ENCODE measurements at regions of chr2 and their contacts with region 1.

Region 1: DNA sequence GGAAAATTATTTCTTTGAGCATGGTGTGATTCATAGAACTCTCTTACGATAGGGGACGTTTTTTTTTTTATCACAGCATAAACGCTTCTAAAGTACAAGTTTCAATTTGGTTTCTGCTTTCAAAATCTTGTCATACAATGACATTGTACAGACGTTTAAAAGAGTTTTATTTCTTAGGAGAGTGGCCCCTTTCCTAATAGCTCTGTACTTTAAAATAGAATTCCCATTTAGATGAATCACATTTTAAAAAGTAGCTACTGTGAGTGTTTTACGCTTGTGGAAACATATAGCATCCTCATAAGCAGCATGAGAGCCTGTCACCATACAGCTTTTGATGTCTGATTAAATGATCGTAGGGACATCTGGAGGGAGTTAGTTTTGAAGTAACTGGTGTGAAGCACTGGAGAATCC is 510.9 kb downstream of the PARD3B start:
- DNase-seq: no peak

Region 2: DNA sequence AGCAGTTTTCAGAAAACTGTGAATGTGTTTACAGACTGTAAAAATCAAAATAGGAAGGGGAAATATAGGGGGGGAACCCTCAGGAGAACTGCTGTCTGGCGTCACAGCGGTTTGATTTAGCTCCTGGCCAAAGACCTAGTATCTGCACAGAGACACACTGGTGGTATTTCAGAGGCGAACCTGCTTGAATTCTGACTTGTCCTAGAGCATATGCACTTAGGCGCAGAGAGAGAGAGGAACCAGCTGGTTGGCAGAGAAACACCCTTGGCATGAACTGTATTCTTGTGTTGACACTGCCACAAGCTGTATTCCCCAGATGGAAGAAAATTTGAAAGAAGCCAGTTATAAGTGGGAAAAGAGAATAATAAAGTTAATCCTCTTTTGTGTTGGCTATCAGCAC is 119.7 kb after region 1 on chr2:
- intact Hi-C with region 1: no loop called
- DNase-seq: no peak

Region 3: DNA sequence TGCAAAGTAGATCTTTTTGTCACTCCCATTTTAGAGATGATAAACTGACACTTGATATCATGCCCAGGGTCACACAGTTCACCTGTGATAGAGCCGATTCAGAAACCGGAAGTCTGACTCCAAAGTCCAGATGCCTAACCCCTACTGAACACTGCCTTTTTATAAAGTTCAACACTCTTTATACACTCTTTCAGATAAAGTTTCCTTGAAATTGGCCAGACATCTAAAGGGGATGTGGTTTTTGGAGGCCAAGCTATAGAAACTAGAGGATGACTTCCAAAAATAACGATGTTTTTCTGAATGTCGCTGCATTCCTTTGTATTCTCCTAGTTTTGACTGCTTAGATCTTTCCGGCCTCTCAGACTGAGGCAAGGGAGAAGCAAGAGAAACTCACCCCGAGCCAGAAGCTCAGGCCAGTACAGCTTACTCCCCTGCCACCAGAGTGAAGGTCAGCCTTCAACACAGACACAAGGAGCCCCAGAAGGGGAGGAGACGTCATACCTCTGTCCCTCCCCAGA is 688.0 kb after region 1 on chr2:
- intact Hi-C with region 1: loop called in 1 of 2 experiments (anchors 5 kb)
- DNase-seq: no peak

Measured in posterior vena cava (tissue), 2 donors.